Activated B cell treated with CpG ODN at 0.5 μM for 24 hours (primary cell): ENCODE measurements at regions of chr15 and their contacts with region 1.

Region 1: GRCh38 chr15:40274350-40275274 is 8.3 kb downstream of the ANKRD63 start:
- DNase-seq: peak; percentile 86
- ATAC-seq: peak; percentile 82
- H3K4me3 Mint-ChIP-seq: no peak overlapping the region
- H3K27ac Mint-ChIP-seq: no peak overlapping the region
- H3K4me1 Mint-ChIP-seq: peaks cover 25% of the 10 kb centered on the region
- H3K27me3 Mint-ChIP-seq: peaks cover 2% of the 10 kb centered on the region
- CTCF ChIP-seq: peak; percentile 97

Region 2: GRCh38 chr15:39782441-39783138 is 492.0 kb before region 1 on chr15 and contains the start of gene FSIP1:
- CTCF ChIA-PET with region 1: interaction called, 14 read pairs
- POLR2A ChIA-PET with region 1: interaction called, 3 read pairs
- intact Hi-C with region 1: loop called (anchors 1 kb)
- DNase-seq: peak; percentile 98
- ATAC-seq: peak; percentile 98
- H3K4me3 Mint-ChIP-seq: peak within 1 kb of the TSS; percentile 98
- H3K27ac Mint-ChIP-seq: peak within 1 kb of the TSS; percentile 91
- H3K4me1 Mint-ChIP-seq: peaks cover 41% of the 10 kb centered on the region
- H3K27me3 Mint-ChIP-seq: peaks cover 4% of the 10 kb centered on the region
- CTCF ChIP-seq: no peak
- total RNA-seq, gene FSIP1: 0.32 and 0.53 TPM in 2 replicates

Region 3: DNA sequence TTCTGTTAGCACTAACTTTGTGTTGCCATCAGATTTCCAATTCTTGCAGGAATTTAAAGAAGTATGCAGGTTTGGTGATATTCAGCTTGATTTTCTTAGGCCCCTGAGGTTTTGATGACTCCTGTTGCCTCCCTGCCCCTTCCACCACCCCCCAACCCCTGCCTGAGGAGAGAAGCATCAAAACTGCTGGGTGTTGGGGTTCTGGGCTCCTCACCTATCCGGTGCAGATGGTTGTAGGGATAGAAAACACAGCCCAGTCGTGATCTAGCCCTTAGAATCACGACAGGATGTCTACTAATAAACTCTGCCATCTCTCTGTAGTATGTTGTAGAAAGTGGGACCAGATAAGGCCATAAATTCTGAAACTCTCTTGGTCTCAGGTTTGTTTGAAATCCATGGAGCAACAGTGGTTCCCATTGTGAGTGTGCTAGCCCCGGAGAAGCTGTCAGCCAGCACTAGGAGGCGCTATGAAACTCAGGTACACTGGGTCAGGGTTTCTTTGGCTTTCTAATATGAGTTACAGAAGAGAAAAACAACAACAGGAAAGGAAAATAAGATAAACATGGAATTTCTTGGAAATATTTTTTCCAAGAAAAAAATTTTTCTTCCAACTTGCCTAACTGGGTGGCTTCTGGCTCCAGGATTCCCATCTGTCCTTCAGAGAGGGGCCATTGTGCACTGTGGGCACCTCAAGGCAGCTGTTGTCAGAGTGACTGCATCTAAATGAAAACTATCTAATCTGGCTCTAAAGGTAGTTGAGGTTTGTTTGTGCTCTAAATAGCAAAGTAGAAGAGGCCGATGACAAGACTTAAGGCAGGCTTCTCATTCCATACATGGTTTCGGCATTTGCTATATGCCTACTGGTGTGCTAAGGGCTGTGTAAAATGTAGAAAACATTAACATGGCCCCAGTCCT is 244.4 kb before region 1 on chr15:
- CTCF ChIA-PET with region 1: interaction called, 11 read pairs
- POLR2A ChIA-PET with region 1: no interaction called
- intact Hi-C with region 1: loop called (anchors 1 kb)
- DNase-seq: no peak
- ATAC-seq: no peak
- H3K4me3 Mint-ChIP-seq: no peak overlapping the region
- H3K27ac Mint-ChIP-seq: no peak overlapping the region
- H3K4me1 Mint-ChIP-seq: no peaks in the 10 kb centered on the region
- H3K27me3 Mint-ChIP-seq: no peaks in the 10 kb centered on the region
- CTCF ChIP-seq: peak; percentile 16

Region 4: GRCh38 chr15:40217159-40217824 is 57.3 kb before region 1 on chr15:
- CTCF ChIA-PET with region 1: interaction called, 228 read pairs
- POLR2A ChIA-PET with region 1: interaction called, 16 read pairs
- intact Hi-C with region 1: loop called (anchors 1 kb)
- DNase-seq: no peak
- ATAC-seq: peak; percentile 100
- H3K4me3 Mint-ChIP-seq: no peak overlapping the region
- H3K27ac Mint-ChIP-seq: no peak overlapping the region
- H3K4me1 Mint-ChIP-seq: no peaks in the 10 kb centered on the region
- H3K27me3 Mint-ChIP-seq: no peaks in the 10 kb centered on the region
- CTCF ChIP-seq: peak; percentile 41

Region 5: DNA sequence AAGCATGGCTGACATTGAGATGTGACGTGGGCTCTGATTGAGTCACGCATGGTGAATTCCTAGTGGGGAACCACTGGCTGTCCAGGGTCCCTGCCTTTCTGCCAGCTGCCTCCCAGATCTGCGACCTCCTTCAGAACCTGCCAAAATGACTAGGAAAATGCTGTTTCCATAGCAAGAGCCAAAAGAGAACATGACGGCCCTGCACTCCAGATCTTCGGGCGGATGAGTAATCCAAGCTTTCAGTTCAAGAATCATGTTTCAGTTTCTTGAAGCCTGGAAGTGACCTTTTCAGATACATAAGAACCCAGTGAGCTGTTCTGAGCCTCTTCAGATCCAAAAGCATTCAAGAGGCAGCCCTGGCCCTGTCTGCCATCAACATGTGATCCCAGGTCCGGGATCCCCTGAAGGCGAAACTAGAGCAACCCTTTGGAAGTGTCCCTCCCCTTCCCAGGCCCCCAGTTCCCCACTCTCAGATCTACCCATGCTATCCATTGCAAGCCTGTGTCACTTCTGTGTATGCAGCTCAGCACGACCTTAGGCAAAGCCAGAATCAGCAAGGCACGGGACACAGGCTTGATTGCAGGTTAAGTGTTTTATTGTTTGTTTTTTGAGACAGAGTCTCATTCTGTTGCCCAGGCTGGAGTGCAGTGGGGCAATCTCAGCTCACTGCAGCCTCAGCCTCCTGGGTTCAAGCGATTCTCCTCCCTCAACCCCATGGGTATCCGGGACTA is 11.4 kb before region 1 on chr15:
- CTCF ChIA-PET with region 1: interaction called, 18 read pairs
- POLR2A ChIA-PET with region 1: no interaction called
- intact Hi-C with region 1: no loop called
- DNase-seq: no peak
- ATAC-seq: no peak
- H3K4me3 Mint-ChIP-seq: no peak overlapping the region
- H3K27ac Mint-ChIP-seq: no peak overlapping the region
- H3K4me1 Mint-ChIP-seq: no peaks in the 10 kb centered on the region
- H3K27me3 Mint-ChIP-seq: no peaks in the 10 kb centered on the region
- CTCF ChIP-seq: no peak

Region 6: DNA sequence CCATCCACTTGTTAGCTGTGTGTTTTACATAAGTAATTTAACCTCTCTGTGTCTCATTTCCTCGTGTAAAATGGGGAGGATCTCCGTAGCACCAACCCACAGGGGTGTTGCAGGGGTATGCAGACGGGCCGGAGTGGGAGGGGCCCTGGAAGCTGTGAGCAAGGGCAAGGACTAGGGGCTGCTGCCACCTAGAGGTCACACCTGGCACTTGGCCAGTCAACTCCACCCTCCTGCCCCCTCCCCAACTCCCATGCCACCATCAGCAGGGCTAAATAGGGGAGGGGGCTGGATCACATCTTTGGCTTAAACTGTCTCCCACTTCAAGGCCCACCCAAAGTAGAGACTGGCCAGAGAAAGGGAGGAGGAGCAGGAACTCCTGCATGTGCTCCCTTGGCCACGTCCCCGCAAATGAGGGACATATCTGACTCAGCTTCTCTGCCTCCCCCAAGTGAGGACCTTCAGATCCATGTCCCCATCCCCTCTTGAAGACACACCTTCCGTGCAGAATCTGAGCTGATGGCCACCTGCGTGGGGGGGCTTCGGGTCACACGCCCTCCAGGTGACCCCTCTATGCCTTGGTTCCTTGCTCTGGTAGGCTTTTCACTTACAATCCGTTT is 63.5 kb after region 1 on chr15:
- CTCF ChIA-PET with region 1: interaction called, 187 read pairs
- POLR2A ChIA-PET with region 1: interaction called, 5 read pairs
- intact Hi-C with region 1: loop called (anchors 1 kb)
- DNase-seq: peak; percentile 67
- ATAC-seq: peak; percentile 96
- H3K4me3 Mint-ChIP-seq: no peak overlapping the region
- H3K27ac Mint-ChIP-seq: no peak overlapping the region
- H3K4me1 Mint-ChIP-seq: peaks cover 24% of the 10 kb centered on the region
- H3K27me3 Mint-ChIP-seq: no peaks in the 10 kb centered on the region
- CTCF ChIP-seq: peak; percentile 17

Region 7: DNA sequence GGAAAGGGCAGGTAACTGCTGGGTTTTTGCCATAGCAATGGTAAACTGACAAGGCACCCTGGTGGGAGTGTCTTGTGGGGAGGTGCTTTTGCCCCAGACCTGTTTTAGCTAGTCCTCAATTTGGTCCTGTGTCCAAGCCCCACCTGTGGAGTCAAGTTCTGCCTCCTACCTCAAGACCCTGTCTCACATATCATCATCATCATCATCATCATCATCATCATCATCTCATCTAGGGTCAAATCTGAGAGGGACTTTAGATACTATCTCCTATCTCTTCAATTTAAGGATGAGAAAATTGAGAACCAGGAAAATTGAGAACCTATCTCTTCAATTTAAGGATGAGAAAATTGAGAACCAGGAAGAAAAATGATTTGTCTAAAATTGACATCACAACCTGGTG is 329.3 kb after region 1 on chr15:
- CTCF ChIA-PET with region 1: no interaction called
- POLR2A ChIA-PET with region 1: no interaction called
- intact Hi-C with region 1: no loop called
- DNase-seq: no peak
- ATAC-seq: no peak
- H3K4me3 Mint-ChIP-seq: no peak overlapping the region
- H3K27ac Mint-ChIP-seq: no peak overlapping the region
- H3K4me1 Mint-ChIP-seq: peaks cover 2% of the 10 kb centered on the region
- H3K27me3 Mint-ChIP-seq: no peaks in the 10 kb centered on the region
- CTCF ChIP-seq: no peak